ENCODE measurements at regions of chr16 and their contacts with region 1.

Region 1: DNA sequence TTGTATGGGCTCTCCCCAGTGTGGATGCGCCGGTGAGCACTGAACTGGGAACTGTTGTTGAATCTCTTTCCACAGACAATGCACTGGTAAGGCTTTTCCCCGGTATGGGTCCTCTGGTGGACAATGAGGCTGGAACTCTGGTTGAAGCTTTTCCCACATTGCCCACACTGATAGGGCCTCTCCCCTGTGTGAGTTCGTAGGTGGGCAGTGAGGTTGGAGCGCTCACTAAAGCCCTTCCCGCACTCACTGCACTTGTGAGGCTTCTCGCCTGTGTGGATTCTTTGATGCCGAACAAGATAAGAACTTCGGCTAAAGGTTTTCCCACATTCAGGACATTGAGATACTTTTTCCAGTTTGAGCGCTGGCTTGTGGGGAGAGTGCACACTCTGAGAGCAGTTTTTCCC is 17.8 kb downstream of the ZSCAN32 start:
- DNase-seq: no peak
- ATAC-seq: no peak
- H3K4me3 ChIP-seq: no peak overlapping the region
- H3K27ac ChIP-seq: no peak overlapping the region
- H3K4me1 ChIP-seq: no peaks in the 10 kb centered on the region
- H3K27me3 ChIP-seq: no peaks in the 10 kb centered on the region
- CTCF ChIP-seq: no peak

Region 2: GRCh38 chr16:2663553-2664546 is 719.2 kb before region 1 on chr16:
- intact Hi-C with region 1: no loop called
- DNase-seq: peak in 1 of 6 donors; percentile 4
- ATAC-seq: peak in 3 of 4 donors; percentile 64 to 74 (median 66)
- H3K4me3 ChIP-seq: no peak overlapping the region
- H3K27ac ChIP-seq: peak overlapping the region in 3 of 4 donors; percentile 20 to 38 (median 24)
- H3K4me1 ChIP-seq: peaks cover 0 to 5% (median 0%) of the 10 kb centered on the region in 3 donors
- H3K27me3 ChIP-seq: no peaks in the 10 kb centered on the region
- CTCF ChIP-seq: no peak

Region 3: DNA sequence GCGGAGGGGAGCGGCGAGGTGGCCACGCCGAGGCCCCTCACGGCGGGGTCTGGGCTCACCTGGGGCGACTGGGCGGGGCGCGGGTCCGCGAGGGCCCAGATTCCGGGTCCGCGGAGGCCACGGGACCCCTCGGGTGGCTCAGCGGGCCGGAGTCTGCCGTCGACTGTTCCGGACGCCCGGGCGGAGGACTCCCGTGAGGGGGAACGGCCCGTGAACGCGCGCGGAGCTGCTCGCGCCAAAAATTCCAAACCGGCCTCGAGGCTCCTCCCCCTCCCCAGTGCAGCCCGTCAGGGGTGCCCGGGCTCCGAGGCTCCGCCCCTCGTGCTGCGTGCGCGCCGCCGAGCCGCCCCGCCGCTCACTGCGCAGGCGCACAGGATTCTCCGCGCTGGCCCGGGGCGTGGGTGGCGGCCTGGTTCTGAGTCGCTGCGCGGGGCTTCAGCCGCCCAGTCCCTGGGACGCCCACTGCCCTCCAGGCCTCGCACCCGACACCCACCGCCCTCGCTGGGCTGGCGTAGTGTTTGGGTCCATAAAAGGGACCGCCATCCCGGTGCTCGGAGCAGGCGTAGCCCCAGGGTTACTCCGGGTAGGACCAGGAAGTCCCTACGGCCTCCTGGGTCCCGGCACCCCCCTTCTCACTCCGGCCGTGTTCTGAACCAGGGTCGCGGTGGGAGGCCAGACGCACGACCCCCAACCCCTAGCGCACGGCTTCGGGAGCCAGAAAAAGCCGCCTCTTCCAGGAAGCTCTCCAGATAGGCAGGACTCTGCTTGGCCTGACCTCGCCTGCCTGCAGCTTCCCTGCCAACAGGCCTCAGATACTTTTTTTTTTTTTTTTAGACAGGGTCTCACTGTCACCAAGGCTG is 402.6 kb before region 1 on chr16 and contains the start of gene PKMYT1:
- intact Hi-C with region 1: no loop called
- DNase-seq: peak; percentile 87 to 99 (median 94)
- ATAC-seq: peak; percentile 84 to 92 (median 90)
- H3K4me3 ChIP-seq: peak within 1 kb of the TSS; percentile 42 to 79 (median 71)
- H3K27ac ChIP-seq: peak within 1 kb of the TSS; percentile 79 to 88 (median 84)
- H3K4me1 ChIP-seq: peaks cover 22 to 54% (median 29%) of the 10 kb centered on the region in 3 donors
- H3K27me3 ChIP-seq: no peaks in the 10 kb centered on the region
- CTCF ChIP-seq: no peak
- total RNA-seq, gene PKMYT1: 0.28 to 1.7 (median 1.1) TPM

Region 4: DNA sequence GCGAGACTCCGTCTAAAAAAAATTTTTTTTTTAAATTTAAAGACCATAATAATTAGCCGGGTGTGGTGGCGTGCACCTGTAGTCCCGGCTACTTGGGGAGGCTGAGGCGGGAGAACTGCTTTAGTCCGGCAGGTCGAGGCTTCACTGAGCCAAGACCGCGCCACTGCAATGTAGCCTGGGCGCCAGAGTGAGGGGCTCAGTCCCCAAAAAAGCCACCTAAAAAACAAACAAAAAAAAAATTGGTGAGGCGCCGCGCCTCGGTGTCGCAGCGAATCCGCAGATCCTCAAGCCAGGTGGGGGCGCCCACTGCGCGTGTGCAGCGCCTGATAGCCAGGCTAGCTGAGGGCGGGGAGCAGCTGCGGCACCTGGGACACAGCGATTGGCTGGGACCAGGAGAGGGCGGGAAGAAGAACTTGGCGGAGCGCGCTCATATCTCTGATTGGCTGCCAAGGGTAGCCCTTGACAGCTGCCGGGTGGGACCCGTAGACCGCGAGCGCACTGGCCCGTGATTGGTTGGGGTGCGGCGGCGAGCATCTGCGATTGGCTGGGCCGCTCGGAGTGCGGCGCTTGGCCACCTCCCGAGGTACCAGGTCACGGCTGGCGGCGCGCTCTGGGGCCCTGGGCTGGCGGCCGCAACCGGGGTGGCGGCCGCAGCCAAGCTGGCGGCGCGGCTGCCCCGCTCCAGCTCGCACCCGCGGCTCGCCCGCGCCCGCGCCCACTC is 379.3 kb before region 1 on chr16:
- intact Hi-C with region 1: no loop called
- DNase-seq: peak; percentile 97 to 99 (median 99)
- ATAC-seq: peak; percentile 80 to 94 (median 84)
- H3K4me3 ChIP-seq: peak overlapping the region in 2 of 4 donors; percentile 13 to 51
- H3K27ac ChIP-seq: no peak overlapping the region
- H3K4me1 ChIP-seq: peaks cover 23 to 32% (median 31%) of the 10 kb centered on the region in 3 donors
- H3K27me3 ChIP-seq: no peaks in the 10 kb centered on the region
- CTCF ChIP-seq: peak in 1 of 4 donors; percentile 41

Region 5: GRCh38 chr16:3317315-3317999 is 65.6 kb before region 1 on chr16:
- intact Hi-C with region 1: loop called in 1 of 3 experiments (anchors 10 kb)
- DNase-seq: no peak
- ATAC-seq: no peak
- H3K4me3 ChIP-seq: no peak overlapping the region
- H3K27ac ChIP-seq: no peak overlapping the region
- H3K4me1 ChIP-seq: no peaks in the 10 kb centered on the region
- H3K27me3 ChIP-seq: no peaks in the 10 kb centered on the region
- CTCF ChIP-seq: no peak

Measured in pancreas (tissue), 10 donors.